GM10248 (cell line): ENCODE measurements at regions of chr1 and their contacts with region 1.

Region 1: DNA sequence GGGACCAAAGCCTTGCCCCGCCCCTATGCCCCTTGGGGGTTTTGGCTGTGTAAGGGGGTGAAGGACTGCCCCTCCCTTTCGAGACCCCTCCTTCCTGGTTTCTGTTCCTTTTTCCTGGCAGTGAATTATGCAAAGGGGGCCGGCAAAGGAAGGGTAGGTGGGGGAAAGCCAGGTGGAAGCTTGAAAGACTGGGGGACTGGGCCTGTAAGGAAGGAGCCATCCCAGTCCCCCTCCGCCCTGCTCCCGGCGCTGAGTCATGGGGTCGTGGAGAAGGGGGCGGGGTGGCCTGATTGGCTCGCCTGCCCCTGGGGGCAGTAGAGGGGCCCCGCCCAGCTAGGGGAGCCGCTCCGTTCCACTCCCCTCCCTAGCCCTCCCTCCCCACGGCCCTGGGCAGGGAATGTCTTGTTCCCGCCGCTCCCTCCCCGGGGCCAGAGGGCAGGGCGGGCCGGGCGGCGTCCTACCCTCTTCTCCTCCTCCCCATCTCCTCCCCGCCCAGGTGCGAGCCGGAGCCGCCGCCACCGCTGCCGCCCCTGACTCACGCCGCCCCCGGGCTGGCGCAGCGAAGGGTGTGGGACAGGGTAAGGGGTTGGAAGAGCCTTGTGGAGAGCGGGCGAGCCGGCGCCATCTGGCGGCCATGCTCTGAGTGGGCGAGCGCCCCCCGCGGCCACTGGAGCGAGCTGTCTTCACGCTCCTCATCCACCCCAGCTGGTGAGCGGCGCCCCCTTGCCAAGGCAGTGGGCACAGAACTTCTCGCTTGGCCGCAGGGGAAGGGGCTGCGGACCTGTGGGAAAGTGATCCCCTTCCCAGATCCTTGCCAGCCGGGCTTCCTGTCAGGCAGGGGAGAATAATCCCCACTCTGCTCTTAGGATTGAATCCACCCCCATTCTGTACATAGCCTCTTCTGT is 14.7 kb downstream of the ZBTB7B start:
- DNase-seq: peak; percentile 88
- CTCF ChIP-seq: peak; percentile 100

Region 2: DNA sequence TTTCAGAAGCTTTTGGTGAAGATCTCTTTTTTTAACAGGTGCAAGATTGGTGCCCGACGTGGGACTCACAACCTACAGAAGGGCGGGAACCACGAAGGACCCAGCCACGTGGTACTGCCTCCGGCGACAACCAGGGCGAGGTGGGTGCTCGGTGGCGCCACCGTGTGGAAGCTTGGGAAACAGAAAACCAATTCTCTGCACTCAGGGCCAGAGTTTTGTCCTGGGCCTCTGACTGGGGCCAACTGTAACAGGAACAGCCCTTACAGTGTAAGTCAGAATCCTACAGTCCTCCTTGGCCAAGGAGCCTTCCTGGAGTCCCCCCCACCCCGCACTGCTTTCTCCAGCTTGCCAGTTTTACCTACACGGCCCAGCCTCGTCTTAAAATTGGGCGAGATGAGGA is 1612.5 kb before region 1 on chr1:
- CTCF ChIA-PET with region 1: no interaction called
- POLR2A ChIA-PET with region 1: no interaction called
- DNase-seq: peak; percentile 47
- CTCF ChIP-seq: peak; percentile 42

Region 3: GRCh38 chr1:154955718-154956543 is 61.4 kb before region 1 on chr1 and contains the start of gene PBXIP1:
- CTCF ChIA-PET with region 1: interaction called, 24 read pairs
- POLR2A ChIA-PET with region 1: no interaction called
- DNase-seq: peak; percentile 92
- CTCF ChIP-seq: peak; percentile 24

Region 4: DNA sequence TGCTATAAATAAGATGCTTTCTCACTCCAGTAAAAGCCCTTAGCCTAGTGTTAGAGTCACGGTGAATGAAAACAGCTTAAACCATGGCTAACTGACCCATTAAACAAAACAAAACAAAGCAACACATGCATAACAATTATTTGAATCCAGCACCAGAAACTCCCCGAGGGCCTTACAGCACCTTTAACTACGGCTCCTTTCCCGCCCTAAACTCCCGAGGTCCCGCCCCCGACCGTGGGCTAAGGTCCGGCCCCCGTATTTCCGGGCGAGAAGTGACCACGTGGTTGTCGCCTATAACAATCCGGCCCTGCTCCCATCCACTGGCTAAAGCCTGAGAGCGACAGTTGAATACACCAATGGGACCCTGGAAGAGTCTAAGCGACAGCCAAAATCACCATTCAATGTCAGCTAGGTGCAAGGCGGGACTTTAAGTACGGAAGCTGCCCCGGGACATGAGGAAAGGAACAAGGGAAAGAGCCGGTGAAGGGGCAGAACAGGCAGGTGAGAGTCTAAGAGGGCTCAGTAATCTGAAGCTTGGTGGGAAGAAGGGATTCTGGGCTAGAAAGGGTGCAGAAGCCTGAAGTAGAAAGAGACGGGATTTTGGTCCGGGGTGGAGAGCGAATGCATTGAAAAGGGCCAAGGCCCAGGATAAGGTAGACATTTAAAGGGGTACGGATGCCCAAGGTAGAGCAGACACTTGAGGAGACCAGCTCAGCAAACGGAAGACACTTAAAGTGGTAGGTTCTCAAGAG is 34.2 kb before region 1 on chr1 and contains the start of gene FLAD1:
- CTCF ChIA-PET with region 1: interaction called, 10 read pairs
- POLR2A ChIA-PET with region 1: interaction called, 3 read pairs
- DNase-seq: peak; percentile 98
- CTCF ChIP-seq: no peak

Region 5: DNA sequence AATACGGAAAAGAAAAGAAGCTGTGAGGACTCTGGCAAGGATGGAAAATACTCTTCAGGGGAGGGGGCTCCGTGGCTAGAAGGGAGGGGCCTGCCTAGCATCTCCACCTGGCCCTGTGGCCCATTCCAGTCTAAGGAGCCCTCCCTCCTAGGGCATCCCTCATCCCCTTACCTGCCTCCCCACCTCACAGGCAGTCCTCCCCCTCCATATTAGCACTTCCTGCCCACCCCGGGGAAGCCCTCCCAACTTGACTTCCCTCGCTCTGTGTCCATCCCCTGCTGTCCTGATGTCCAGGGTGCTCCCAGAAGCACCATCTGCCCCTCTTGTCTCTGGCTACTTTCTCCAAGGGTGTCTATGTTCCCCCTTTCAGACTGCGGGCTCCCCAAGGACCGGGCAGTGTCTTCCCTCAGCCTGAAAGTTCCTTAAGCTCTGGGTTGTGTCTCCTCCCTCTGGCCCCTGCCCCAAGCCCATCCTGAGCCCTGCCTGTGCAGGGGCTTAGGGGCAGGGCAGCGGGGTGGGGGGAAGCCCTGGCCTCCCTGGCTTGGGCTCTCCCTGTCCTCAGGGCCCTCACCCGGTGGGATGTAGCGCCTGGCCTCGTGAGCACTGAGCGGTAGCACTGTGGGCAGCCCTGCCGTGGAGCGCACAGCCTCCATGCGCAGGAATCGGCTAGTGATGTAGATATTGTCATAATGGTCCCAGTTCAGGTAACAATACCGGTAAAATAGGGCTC is 12.4 kb after region 1 on chr1:
- CTCF ChIA-PET with region 1: interaction called, 24 read pairs
- POLR2A ChIA-PET with region 1: no interaction called
- DNase-seq: no peak
- CTCF ChIP-seq: no peak

Region 6: DNA sequence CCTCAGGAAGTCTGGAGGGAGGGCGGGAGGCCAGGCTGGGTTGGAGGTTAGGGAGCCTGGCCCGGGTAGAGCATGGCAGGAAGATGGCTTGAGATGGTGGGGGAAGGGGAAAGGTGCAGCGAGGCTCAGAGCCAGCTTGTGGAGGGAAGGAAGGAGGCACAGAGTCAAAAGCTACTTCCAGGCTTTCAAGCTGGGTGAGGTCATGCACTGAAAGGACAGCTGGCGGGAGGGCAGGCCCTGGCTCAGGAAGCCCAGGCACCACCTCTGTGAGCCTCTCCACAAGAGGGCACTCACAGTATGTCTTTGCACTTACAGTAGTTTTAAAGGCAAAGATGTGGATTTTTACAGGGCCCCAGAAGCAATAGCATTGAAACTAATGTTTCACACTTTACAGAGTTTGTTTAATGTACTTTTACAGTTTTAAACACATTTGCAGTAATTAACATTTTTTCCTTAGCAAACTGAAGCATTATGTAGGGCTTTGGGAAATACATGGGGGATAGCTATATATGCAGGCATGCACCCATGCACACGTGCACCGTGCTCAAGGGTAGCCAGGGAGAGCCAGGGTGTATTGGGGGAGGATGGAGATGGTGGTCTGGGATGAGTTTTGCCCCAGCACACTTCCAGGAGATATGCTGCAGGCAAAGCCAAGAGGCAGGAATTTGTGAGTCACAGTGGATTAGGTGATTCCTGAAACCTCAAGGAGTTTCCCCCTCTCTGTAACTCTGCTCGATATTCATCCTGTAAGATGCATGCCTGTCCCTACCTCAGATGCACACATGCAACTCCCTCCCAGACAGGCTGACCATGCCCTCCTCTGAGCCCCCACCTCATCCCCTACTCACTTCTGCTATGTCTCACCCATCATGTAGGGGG is 27.8 kb after region 1 on chr1:
- CTCF ChIA-PET with region 1: interaction called, 67 read pairs
- POLR2A ChIA-PET with region 1: no interaction called
- DNase-seq: peak; percentile 81
- CTCF ChIP-seq: peak; percentile 67

Region 7: GRCh38 chr1:155063550-155064110 is 46.3 kb after region 1 on chr1 and contains the start of gene EFNA4:
- CTCF ChIA-PET with region 1: interaction called, 12 read pairs
- POLR2A ChIA-PET with region 1: no interaction called
- DNase-seq: peak; percentile 91
- CTCF ChIP-seq: no peak